ENCODE measurements at regions of chr15 and their contacts with region 1.

Region 1: GRCh38 chr15:84658080-84658787 is at the start of gene NMB:
- DNase-seq: peak; percentile 70 to 80
- ATAC-seq: peak; percentile 59 to 73 (median 68)
- H3K4me3 ChIP-seq: peak within 1 kb of the TSS; percentile 37 to 75 (median 69)
- H3K27ac ChIP-seq: peak within 1 kb of the TSS; percentile 34 to 88 (median 76)
- H3K4me1 ChIP-seq: peaks cover 8 to 38% (median 24%) of the 10 kb centered on the region in 9 donors
- H3K27me3 ChIP-seq: no peaks in the 10 kb centered on the region
- CTCF ChIP-seq: peak; percentile 37 to 81 (median 56)
- total RNA-seq, gene NMB: 0.96 to 6.6 (median 2.1) TPM

Region 2: GRCh38 chr15:84600851-84601838 is 57.1 kb before region 1 on chr15 and contains the start of gene ZSCAN2:
- intact Hi-C with region 1: loop called in 5 of 10 experiments (anchors 2 to 10 kb)
- DNase-seq: peak; percentile 94 to 96
- ATAC-seq: peak; percentile 98 to 99 (median 99)
- H3K4me3 ChIP-seq: peak within 1 kb of the TSS; percentile 69 to 99 (median 82)
- H3K27ac ChIP-seq: peak within 1 kb of the TSS in 9 of 10 donors; percentile 46 to 80 (median 72)
- H3K4me1 ChIP-seq: peaks cover 0 to 51% (median 15%) of the 10 kb centered on the region in 9 donors
- H3K27me3 ChIP-seq: no peaks in the 10 kb centered on the region
- CTCF ChIP-seq: no peak
- total RNA-seq, gene ZSCAN2: 3.7 to 8.1 (median 5.9) TPM

Region 3: GRCh38 chr15:84702961-84703482 is 44.8 kb after region 1 on chr15:
- intact Hi-C with region 1: loop called in 1 of 10 experiments (anchors 5 kb)
- DNase-seq: peak; percentile 17 to 78
- ATAC-seq: peak; percentile 78 to 94 (median 90)
- H3K4me3 ChIP-seq: no peak overlapping the region
- H3K27ac ChIP-seq: peak overlapping the region in 5 of 10 donors; percentile 13 to 51 (median 26)
- H3K4me1 ChIP-seq: peaks cover 3 to 65% (median 22%) of the 10 kb centered on the region in 9 donors
- H3K27me3 ChIP-seq: no peaks in the 10 kb centered on the region
- CTCF ChIP-seq: no peak

Region 4: DNA sequence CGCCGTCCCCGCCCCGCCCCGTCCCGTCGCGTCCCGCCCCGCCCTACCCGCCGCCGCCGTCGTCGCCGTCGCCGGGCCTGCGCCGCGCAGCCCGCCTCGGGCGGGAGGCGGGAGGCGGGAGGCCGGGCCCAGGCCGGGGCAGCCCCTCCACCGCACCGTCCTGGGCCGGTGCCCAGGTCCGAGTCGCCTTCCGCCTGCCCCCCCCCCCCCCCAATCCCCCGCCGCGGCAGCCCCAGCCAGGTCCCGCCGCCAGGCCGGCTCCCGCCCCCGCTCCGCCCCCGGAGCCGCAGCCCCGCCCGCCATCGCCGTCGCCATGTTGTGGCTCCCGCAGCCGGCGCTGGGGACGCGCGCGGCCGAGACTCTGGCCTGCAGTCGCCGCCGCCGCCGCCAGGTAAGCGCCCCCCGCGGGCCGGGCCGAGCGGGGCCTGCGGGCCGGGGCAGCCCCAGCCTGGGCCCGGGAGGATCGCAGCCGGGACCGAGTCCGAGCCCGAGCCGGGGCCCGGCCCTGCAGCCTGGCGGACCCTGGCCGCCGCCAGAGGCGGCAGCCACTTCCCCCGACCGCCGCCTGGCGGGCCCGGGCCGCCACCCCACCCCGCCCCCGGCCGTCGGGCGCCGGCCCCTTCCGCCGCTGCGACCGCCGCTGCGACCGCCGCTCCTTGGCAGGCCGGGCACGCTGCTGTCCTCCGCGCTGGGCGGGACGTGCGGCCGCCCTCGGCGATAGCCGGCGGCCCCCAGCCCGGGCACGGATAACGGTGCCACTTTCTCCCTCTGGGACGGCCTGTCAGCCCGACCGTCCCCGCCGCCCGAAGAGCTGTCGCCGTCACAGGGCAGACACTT is 90.3 kb after region 1 on chr15 and contains the start of gene ZNF592:
- intact Hi-C with region 1: loop called in 3 of 10 experiments (anchors 1 to 5 kb)
- DNase-seq: peak; percentile 86 to 92
- ATAC-seq: peak; percentile 53 to 86 (median 77)
- H3K4me3 ChIP-seq: peak within 1 kb of the TSS; percentile 61 to 98 (median 86)
- H3K27ac ChIP-seq: peak within 1 kb of the TSS; percentile 98 to 100 (median 100)
- H3K4me1 ChIP-seq: peaks cover 10 to 74% (median 63%) of the 10 kb centered on the region in 9 donors
- H3K27me3 ChIP-seq: no peaks in the 10 kb centered on the region
- CTCF ChIP-seq: peak in 5 of 9 donors; percentile 11 to 68 (median 36)
- total RNA-seq, gene ZNF592: 17.1 to 26.9 (median 20.8) TPM

Region 5: GRCh38 chr15:84818261-84819131 is 160.3 kb after region 1 on chr15:
- intact Hi-C with region 1: loop called in 4 of 10 experiments (anchors 5 to 10 kb)
- DNase-seq: peak in 1 of 2 donors; percentile 71
- ATAC-seq: peak in 7 of 8 donors; percentile 12 to 63 (median 30)
- H3K4me3 ChIP-seq: peak overlapping the region; percentile 31 to 73 (median 64)
- H3K27ac ChIP-seq: peak overlapping the region; percentile 91 to 99 (median 96)
- H3K4me1 ChIP-seq: peaks cover 14 to 78% (median 70%) of the 10 kb centered on the region in 9 donors
- H3K27me3 ChIP-seq: no peaks in the 10 kb centered on the region
- CTCF ChIP-seq: peak in 4 of 9 donors; percentile 9 to 41 (median 24)

Region 6: DNA sequence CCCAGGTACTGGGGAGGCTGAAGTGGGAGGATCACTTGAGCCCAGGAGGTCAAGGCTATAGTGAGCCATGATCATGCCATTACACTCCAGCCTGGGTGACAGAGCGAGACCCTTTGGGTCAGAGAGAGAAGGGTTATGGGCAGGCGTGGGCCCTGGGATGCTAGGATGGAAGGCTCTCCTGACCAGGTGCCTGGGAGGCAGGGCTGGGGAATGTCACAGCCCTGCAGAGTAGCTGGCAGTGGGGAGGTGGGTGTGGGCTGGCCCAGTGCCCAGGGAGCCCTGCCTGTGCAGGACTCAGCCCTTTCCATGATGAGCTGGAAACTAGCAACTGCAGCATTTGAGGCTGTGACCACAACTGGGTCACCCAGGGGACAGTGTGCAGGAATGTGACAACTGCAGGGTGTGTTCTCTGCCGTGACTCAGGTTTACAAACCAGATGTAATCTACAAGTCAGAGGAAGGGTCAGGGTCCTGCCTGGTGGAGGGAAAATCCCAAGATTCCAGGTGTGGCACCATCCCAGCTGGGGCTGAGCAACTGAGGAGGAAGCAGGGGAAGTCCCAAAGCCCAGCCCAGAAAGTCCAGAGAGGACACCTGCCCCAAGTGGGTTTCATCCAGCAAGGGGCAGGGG is 271.6 kb after region 1 on chr15:
- intact Hi-C with region 1: loop called in 6 of 10 experiments (anchors 5 to 10 kb)
- DNase-seq: no peak
- ATAC-seq: no peak
- H3K4me3 ChIP-seq: no peak overlapping the region
- H3K27ac ChIP-seq: no peak overlapping the region
- H3K4me1 ChIP-seq: peaks cover 0 to 19% (median 12%) of the 10 kb centered on the region in 9 donors
- H3K27me3 ChIP-seq: no peaks in the 10 kb centered on the region
- CTCF ChIP-seq: no peak